Naive thymus-derived CD4-positive, alpha-beta T cell (primary cell): ENCODE measurements at regions of chr2 and their contacts with region 1.

Region 1: GRCh38 chr2:131492418-131493198 is 411 bp upstream of the MZT2A start:
- DNase-seq: peak; percentile 89 to 99 (median 93)
- ATAC-seq: peak; percentile 84
- H3K4me3 ChIP-seq: peak overlapping the region; percentile 67
- H3K4me3 Mint-ChIP-seq: peak overlapping the region; percentile 89 to 98 (median 94)
- H3K27ac ChIP-seq: peak overlapping the region; percentile 96
- H3K27ac Mint-ChIP-seq: peak overlapping the region; percentile 89 to 99 (median 99)
- H3K4me1 ChIP-seq: peaks cover 13 to 14% of the 10 kb centered on the region in 2 donors
- H3K4me1 Mint-ChIP-seq: peaks cover 25 to 56% (median 42%) of the 10 kb centered on the region in 7 donors
- H3K27me3 ChIP-seq: no peaks in the 10 kb centered on the region
- H3K27me3 Mint-ChIP-seq: no peaks in the 10 kb centered on the region

Region 2: DNA sequence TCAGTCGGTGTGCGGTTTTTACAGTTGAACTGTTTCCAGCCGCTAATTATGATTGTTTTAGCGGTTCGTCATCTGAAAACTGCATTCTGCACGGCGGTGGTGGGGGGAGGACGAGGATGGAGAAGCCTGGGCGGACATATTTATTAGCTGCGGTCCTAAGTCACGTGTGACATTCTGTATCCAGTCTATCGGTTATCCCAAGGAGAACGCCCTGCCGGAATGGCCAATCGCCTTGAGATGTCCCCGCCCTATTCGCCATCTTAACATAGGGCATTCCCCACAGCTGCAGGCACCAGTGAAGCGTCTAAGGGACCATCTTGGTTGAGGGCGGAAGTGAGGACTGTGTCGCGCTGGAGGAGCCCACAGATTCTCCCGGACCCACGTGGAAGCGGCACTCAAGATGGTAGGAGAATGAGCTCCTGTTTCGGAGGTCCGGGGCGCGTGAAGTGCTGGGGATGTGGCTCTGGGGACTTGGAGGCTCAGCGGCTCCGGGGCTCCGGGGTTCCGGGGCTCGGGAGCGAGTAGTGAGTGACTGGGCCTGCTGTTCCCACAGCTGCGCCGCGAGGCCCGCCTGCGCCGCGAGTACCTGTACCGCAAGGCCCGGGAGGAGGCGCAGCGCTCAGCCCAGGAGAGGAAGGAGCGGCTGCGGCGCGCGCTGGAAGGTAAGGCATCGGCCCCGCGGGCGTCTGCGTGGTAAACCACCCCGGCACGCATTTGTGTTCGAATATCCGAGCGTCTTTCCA is 1149.9 kb before region 1 on chr2 and contains the start of gene IMP4:
- CTCF ChIA-PET with region 1: no interaction called
- POLR2A ChIA-PET with region 1: interaction called, 4 read pairs
- intact Hi-C with region 1: loop called in 1 of 2 experiments (anchors 2 kb)
- DNase-seq: peak; percentile 83 to 98 (median 96)
- ATAC-seq: peak; percentile 93
- H3K4me3 ChIP-seq: peak within 1 kb of the TSS; percentile 80
- H3K4me3 Mint-ChIP-seq: peak within 1 kb of the TSS; percentile 94 to 100 (median 99)
- H3K27ac ChIP-seq: peak within 1 kb of the TSS; percentile 97
- H3K27ac Mint-ChIP-seq: peak within 1 kb of the TSS; percentile 98 to 100 (median 99)
- H3K4me1 ChIP-seq: peaks cover 10 to 19% of the 10 kb centered on the region in 2 donors
- H3K4me1 Mint-ChIP-seq: peaks cover 17 to 51% (median 37%) of the 10 kb centered on the region in 7 donors
- H3K27me3 ChIP-seq: no peaks in the 10 kb centered on the region
- H3K27me3 Mint-ChIP-seq: peaks cover 0 to 2% (median 0%) of the 10 kb centered on the region in 5 donors
- total RNA-seq, gene IMP4: 69.9 to 88.5 (median 79.3) TPM

Region 3: DNA sequence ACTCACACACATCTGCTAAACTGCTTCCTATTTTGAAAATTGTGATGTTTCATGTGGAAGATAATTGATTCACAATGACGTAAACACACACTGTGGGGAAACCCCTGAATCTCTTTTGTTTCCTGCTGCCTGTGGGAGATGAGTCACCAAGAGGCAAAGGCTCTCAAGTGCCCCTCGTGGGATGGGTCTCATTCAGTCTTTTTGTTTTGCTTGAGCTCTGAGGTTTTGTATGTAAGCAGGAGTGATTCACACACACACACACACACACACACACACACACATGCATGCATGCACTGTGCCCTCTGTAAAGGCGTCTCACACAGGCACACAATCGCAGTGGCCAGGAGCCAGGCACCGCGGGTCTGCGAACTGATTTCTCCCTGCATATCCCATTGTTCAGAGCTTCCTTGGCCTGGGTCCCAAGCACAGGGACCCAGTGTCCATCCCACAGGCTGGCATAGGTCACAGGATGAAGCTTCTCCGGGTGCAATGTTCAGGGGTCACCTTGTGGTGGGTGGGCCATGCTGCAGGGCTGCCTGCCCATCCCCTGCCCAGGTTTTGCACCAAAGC is 668.0 kb before region 1 on chr2:
- CTCF ChIA-PET with region 1: no interaction called
- POLR2A ChIA-PET with region 1: no interaction called
- intact Hi-C with region 1: loop called in 1 of 2 experiments (anchors 10 kb)
- DNase-seq: peak in 7 of 9 donors; percentile 25 to 75 (median 54)
- ATAC-seq: peak; percentile 85
- H3K4me3 ChIP-seq: no peak overlapping the region
- H3K4me3 Mint-ChIP-seq: peak overlapping the region in 2 of 10 donors; percentile 24 to 60
- H3K27ac ChIP-seq: no peak overlapping the region
- H3K27ac Mint-ChIP-seq: peak overlapping the region in 7 of 9 donors; percentile 41 to 83 (median 68)
- H3K4me1 ChIP-seq: peaks cover 11 to 14% of the 10 kb centered on the region in 2 donors
- H3K4me1 Mint-ChIP-seq: peaks cover 5 to 19% (median 9%) of the 10 kb centered on the region in 7 donors
- H3K27me3 ChIP-seq: no peaks in the 10 kb centered on the region
- H3K27me3 Mint-ChIP-seq: peaks cover 0 to 15% (median 0%) of the 10 kb centered on the region in 5 donors

Region 4: DNA sequence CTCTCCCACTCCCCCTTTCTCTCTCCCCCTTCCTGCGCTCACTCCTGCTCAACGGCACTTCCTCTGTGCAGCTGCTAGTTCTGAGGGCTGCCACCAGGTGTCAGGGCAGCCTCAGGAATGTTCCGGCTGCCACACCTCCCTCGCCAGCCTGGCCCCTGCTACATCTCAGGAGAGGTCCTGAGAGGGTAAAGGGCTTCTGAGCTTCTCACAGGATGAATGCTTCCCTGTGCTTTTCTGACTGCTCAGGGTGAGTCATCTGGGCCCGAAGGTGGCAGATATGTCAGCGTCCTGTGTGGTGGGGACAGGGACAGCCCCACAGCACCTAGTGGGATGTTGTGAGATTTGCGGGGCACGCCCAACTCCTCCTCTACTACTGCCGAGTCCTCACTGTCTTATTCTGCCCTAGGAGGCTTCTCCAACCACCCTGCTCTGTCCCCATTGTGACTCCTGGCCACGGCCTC is 338.5 kb before region 1 on chr2:
- CTCF ChIA-PET with region 1: interaction called, 3 read pairs
- POLR2A ChIA-PET with region 1: no interaction called
- intact Hi-C with region 1: loop called (anchors 1 to 2 kb)
- DNase-seq: peak; percentile 34 to 78 (median 55)
- ATAC-seq: peak; percentile 86
- H3K4me3 ChIP-seq: peak overlapping the region; percentile 11
- H3K4me3 Mint-ChIP-seq: peak overlapping the region in 3 of 10 donors; percentile 32 to 41 (median 33)
- H3K27ac ChIP-seq: no peak overlapping the region
- H3K27ac Mint-ChIP-seq: peak overlapping the region in 4 of 9 donors; percentile 0 to 46 (median 10)
- H3K4me1 ChIP-seq: no peaks in the 10 kb centered on the region
- H3K4me1 Mint-ChIP-seq: peaks cover 5 to 25% (median 16%) of the 10 kb centered on the region in 7 donors
- H3K27me3 ChIP-seq: no peaks in the 10 kb centered on the region
- H3K27me3 Mint-ChIP-seq: peaks cover 0 to 8% (median 0%) of the 10 kb centered on the region in 5 donors

Region 5: GRCh38 chr2:131521961-131522794 is 29.6 kb after region 1 on chr2:
- CTCF ChIA-PET with region 1: no interaction called
- POLR2A ChIA-PET with region 1: interaction called, 3 read pairs
- intact Hi-C with region 1: loop called (anchors 1 kb)
- DNase-seq: no peak
- ATAC-seq: no peak
- H3K4me3 ChIP-seq: no peak overlapping the region
- H3K4me3 Mint-ChIP-seq: no peak overlapping the region
- H3K27ac ChIP-seq: no peak overlapping the region
- H3K27ac Mint-ChIP-seq: peak overlapping the region in 1 of 9 donors; percentile 54
- H3K4me1 ChIP-seq: no peaks in the 10 kb centered on the region
- H3K4me1 Mint-ChIP-seq: peaks cover 0 to 7% (median 0%) of the 10 kb centered on the region in 7 donors
- H3K27me3 ChIP-seq: no peaks in the 10 kb centered on the region
- H3K27me3 Mint-ChIP-seq: no peaks in the 10 kb centered on the region

Region 6: GRCh38 chr2:131801210-131801744 is 308.7 kb after region 1 on chr2:
- CTCF ChIA-PET with region 1: no interaction called
- POLR2A ChIA-PET with region 1: no interaction called
- intact Hi-C with region 1: loop called in 1 of 2 experiments (anchors 5 kb)
- DNase-seq: peak in 2 of 9 donors; percentile 3 to 9
- ATAC-seq: no peak
- H3K4me3 ChIP-seq: no peak overlapping the region
- H3K4me3 Mint-ChIP-seq: peak overlapping the region in 3 of 10 donors; percentile 17 to 38 (median 19)
- H3K27ac ChIP-seq: no peak overlapping the region
- H3K27ac Mint-ChIP-seq: no peak overlapping the region
- H3K4me1 ChIP-seq: no peaks in the 10 kb centered on the region
- H3K4me1 Mint-ChIP-seq: peaks cover 0 to 9% (median 0%) of the 10 kb centered on the region in 7 donors
- H3K27me3 ChIP-seq: no peaks in the 10 kb centered on the region
- H3K27me3 Mint-ChIP-seq: peaks cover 7 to 19% (median 14%) of the 10 kb centered on the region in 5 donors